Sciatic nerve (tissue), 2 donors: ENCODE measurements at regions of chr1 and their contacts with region 1.

Region 1: GRCh38 chr1:176617881-176618280 is 154.9 kb downstream of the PAPPA2 start:
- DNase-seq: no peak
- ATAC-seq: no peak

Region 2: GRCh38 chr1:177137814-177138213 is 519.9 kb after region 1 on chr1:
- intact Hi-C with region 1: no loop called
- DNase-seq: no peak
- ATAC-seq: no peak

Region 3: GRCh38 chr1:177794376-177794991 is 1176.6 kb after region 1 on chr1:
- intact Hi-C with region 1: loop called (anchors 5 kb)
- DNase-seq: no peak
- ATAC-seq: no peak